CD8-positive, alpha-beta T cell (primary cell): ENCODE measurements at regions of chr19 and their contacts with region 1.

Region 1: GRCh38 chr19:36081385-36081784 is 26.7 kb downstream of the WDR62 start:
- DNase-seq: no peak
- ATAC-seq: no peak
- H3K4me3 ChIP-seq: no peak overlapping the region
- H3K4me3 Mint-ChIP-seq: no peak overlapping the region
- H3K27ac ChIP-seq: no peak overlapping the region
- H3K27ac Mint-ChIP-seq: no peak overlapping the region
- H3K4me1 ChIP-seq: no peaks in the 10 kb centered on the region
- H3K4me1 Mint-ChIP-seq: no peaks in the 10 kb centered on the region
- H3K27me3 ChIP-seq: no peaks in the 10 kb centered on the region
- H3K27me3 Mint-ChIP-seq: no peaks in the 10 kb centered on the region
- CTCF ChIP-seq: no peak

Region 2: DNA sequence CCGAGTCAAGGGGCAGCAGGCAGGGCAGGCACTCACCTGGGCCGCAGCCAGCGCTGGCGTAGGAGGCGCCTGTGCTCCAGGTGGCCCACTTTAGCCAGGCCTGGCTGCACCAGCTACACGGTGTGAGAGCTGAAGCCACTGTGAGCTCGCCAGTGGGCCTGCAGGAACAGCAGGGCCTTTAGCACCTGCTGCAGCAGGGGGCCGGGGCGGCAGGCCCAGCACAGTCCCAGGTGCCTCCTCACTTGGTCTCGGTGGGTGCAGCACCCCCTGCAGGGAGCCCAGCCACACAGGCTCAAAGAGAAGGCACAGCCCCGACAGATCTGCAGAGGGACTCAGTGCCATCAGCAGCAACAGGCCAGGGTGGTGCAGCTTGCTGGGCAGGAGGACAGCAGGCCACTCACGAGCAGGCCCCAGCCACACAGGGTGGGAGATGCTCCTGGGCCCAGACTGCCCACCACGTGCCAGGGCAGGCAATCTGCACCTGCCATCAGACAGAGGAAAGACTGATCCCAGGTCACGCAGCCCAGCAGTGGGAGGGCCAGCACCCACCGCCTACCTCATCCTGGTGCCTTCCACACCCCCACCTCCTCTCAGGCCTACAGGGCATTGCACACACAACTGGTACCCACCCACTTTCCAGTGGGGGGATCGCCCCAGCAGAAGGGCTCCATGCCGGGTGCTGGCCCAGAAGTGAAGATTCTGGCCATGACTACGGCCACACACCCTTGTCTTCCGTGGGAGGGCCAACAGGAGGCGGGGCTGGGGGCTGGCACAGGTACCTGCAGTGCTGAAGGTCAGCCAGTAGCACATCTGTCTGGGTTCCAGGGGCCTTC is 290.2 kb before region 1 on chr19:
- CTCF ChIA-PET with region 1: no interaction called
- POLR2A ChIA-PET with region 1: no interaction called
- intact Hi-C with region 1: no loop called
- DNase-seq: peak in 1 of 9 experiments; percentile 33
- ATAC-seq: peak; percentile 29
- H3K4me3 ChIP-seq: no peak overlapping the region
- H3K4me3 Mint-ChIP-seq: no peak overlapping the region
- H3K27ac ChIP-seq: no peak overlapping the region
- H3K27ac Mint-ChIP-seq: no peak overlapping the region
- H3K4me1 ChIP-seq: no peaks in the 10 kb centered on the region
- H3K4me1 Mint-ChIP-seq: no peaks in the 10 kb centered on the region
- H3K27me3 ChIP-seq: no peaks in the 10 kb centered on the region
- H3K27me3 Mint-ChIP-seq: peaks cover 12% of the 10 kb centered on the region
- CTCF ChIP-seq: no peak

Region 3: DNA sequence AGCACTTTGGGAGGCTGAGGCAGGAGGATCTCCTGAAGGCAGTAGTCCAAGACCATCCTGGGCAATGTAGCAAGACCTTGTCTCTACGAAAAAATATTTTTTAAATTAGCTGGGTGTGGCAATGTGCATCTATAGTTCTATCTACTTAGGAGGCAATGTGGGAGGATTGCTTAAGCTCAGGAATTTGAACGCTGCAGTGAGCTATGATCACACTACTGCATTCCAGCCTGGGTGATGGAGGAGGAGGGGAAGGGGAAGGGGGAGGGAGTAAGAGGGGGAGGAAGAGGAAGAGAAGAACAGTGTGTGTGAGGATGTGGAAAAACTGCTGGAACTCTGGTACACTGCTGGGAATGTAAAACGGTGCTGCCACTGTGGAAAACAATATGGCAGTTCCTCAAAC is 39.6 kb before region 1 on chr19:
- CTCF ChIA-PET with region 1: no interaction called
- POLR2A ChIA-PET with region 1: no interaction called
- intact Hi-C with region 1: loop called in 1 of 2 experiments (anchors 2 kb)
- DNase-seq: no peak
- ATAC-seq: no peak
- H3K4me3 ChIP-seq: no peak overlapping the region
- H3K4me3 Mint-ChIP-seq: no peak overlapping the region
- H3K27ac ChIP-seq: no peak overlapping the region
- H3K27ac Mint-ChIP-seq: no peak overlapping the region
- H3K4me1 ChIP-seq: peaks cover 5% of the 10 kb centered on the region
- H3K4me1 Mint-ChIP-seq: peaks cover 6% of the 10 kb centered on the region
- H3K27me3 ChIP-seq: no peaks in the 10 kb centered on the region
- H3K27me3 Mint-ChIP-seq: no peaks in the 10 kb centered on the region
- CTCF ChIP-seq: no peak

Region 4: GRCh38 chr19:36060430-36060829 is 21.0 kb before region 1 on chr19:
- CTCF ChIA-PET with region 1: no interaction called
- POLR2A ChIA-PET with region 1: no interaction called
- intact Hi-C with region 1: no loop called
- DNase-seq: peak in 4 of 9 experiments; percentile 15 to 45 (median 26)
- ATAC-seq: no peak
- H3K4me3 ChIP-seq: no peak overlapping the region
- H3K4me3 Mint-ChIP-seq: no peak overlapping the region
- H3K27ac ChIP-seq: no peak overlapping the region
- H3K27ac Mint-ChIP-seq: no peak overlapping the region
- H3K4me1 ChIP-seq: peaks cover 3% of the 10 kb centered on the region
- H3K4me1 Mint-ChIP-seq: peaks cover 6% of the 10 kb centered on the region
- H3K27me3 ChIP-seq: no peaks in the 10 kb centered on the region
- H3K27me3 Mint-ChIP-seq: no peaks in the 10 kb centered on the region
- CTCF ChIP-seq: no peak